Activated CD4-positive, alpha-beta memory T cell treated with anti-CD3 and anti-CD28 coated beads, Interleukin-2, amount 10 ng/mL, durations not matched to agents 7 days and 5 days (primary cell): ENCODE measurements at regions of chr19 and their contacts with region 1.

Region 1: DNA sequence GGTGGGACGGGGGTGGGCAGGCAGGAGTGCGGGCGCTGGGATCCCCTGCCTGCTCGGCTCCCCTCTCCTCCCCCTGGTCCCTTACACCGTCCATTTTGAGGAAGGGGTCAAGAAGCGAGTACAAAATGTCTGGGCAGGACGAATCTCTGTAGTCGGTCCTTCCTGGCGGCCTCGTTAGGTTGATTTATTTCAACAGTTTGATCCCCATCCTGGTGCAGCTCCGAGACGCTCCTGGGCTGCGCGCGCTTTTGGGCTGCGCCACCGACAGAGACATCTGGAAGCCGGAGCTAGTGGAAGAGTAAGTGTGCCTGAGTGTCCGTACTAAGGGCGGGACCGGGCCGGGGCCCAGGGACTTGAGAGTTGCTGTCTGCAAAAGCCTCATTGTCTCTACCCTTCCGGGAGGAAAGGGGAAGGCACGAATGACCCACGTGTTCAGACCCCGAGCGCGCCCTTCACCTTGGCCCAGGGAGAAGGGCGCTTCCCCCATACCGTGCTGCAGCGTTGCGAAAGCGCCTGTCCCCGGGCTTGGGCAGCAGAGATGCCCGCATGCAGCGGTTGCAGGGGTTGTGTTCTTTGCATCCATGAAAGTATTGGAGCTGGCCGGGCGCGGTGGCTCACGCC is 1.8 kb downstream of the ZNF114 start:
- DNase-seq: peak; percentile 24
- H3K4me3 Mint-ChIP-seq: peak overlapping the region; percentile 85
- H3K27ac Mint-ChIP-seq: peak overlapping the region; percentile 12
- H3K4me1 Mint-ChIP-seq: peaks cover 20% of the 10 kb centered on the region
- H3K27me3 Mint-ChIP-seq: peaks cover 13% of the 10 kb centered on the region

Region 2: DNA sequence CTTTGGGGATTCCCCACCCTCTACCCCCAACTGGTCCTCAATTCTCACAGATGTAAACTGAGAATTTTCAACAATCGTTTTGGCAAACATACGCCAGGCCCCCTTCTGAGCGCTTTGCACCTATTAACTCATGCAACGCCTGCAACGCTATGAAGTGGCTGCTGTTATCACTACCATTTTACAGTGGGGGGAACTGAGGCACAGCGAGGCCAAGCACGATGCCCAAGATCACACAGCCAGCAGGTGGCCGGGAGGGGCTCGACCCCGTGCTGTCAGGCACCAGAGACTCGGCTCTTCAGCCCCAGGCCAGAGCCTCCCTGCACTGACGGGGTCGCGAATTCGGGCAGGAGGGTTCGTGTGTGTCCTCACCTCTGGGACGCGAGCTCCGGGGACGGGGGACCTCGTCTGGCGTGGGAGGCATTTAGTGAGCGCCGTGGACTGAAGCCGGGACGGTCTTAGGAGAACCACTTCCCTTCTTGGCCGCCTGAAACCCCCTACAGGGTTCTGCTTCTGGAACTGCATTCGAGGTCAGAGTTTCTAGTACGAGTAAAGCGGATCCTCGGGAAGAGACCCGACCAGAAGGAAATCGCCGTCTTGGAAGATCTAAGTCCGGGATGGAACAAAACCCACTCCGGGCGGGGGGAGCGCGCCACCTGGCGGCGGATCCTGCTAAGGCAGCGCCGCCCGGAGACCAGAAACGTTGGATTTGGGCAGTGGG is 19.3 kb after region 1 on chr19:
- CTCF ChIA-PET with region 1: interaction called, 13 read pairs
- POLR2A ChIA-PET with region 1: no interaction called
- DNase-seq: peak; percentile 59
- H3K4me3 Mint-ChIP-seq: peak overlapping the region; percentile 60
- H3K27ac Mint-ChIP-seq: no peak overlapping the region
- H3K4me1 Mint-ChIP-seq: peaks cover 6% of the 10 kb centered on the region
- H3K27me3 Mint-ChIP-seq: peaks cover 8% of the 10 kb centered on the region

Region 3: DNA sequence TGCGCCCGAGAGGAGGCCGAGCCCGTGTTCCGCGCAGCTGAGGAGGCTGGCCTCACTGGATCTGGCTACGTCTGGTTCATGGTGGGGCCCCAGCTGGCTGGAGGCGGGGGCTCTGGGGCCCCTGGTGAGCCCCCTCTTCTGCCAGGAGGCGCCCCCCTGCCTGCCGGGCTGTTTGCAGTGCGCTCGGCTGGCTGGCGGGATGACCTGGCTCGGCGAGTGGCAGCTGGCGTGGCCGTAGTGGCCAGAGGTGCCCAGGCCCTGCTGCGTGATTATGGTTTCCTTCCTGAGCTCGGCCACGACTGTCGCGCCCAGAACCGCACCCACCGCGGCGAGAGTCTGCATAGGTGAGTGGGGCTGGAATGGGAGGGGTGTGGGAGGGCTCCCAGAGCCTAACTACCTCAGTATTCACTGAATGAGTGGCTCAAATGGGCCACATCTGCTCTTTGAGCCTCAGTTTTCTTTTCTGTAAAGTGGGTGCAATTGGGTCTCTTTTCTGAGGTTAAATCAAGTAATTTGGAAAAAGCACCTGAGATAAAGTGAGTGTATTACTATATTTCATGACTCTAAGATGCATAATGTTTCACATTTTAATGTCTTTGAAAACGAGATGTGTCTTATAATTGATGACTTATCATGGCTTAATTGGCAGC is 133.5 kb after region 1 on chr19:
- CTCF ChIA-PET with region 1: no interaction called
- POLR2A ChIA-PET with region 1: no interaction called
- DNase-seq: no peak
- H3K4me3 Mint-ChIP-seq: no peak overlapping the region
- H3K27ac Mint-ChIP-seq: no peak overlapping the region
- H3K4me1 Mint-ChIP-seq: peaks cover 28% of the 10 kb centered on the region
- H3K27me3 Mint-ChIP-seq: peaks cover 16% of the 10 kb centered on the region